OCI-LY7 (cell line): ENCODE measurements at regions of chr11 and their contacts with region 1.

Region 1: DNA sequence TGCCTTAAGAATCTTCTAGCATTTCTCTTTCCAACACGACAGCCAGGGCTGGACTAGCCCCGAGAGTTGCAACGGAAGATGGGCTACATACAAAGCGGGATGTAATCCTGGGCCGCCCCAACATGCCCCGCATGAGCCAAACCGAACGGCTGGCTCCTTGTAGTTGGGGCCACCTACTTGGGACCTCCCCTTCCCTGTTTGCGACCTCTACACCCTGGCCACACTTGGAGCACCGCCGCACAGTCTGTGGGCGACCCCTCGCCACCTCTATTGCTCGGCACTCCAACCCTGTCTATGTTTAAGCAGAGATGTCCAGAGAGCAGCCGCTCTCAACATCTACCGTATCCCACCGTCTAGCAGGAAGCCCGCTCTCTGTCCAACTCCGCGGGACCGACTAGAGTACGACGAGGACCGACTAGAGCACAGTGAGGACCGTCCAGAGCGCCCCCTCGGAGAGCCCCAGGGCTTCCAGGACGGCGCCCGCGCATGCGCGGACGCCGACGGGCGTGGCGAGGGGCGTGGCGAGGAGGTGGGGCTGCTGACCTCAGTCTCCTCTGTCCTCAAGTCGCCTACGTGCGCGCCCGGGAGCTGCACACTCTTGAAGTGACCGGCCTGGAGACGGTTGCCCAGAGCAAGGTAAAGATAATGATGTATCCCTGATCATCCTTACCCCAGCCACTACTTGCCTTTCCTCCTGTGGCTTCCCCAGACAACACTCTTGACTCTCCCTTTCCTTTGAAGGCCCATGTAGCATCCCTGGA is 32.3 kb downstream of the NEAT1 start:
- DNase-seq: peak; percentile 91
- H3K4me3 ChIP-seq: peak overlapping the region; percentile 78
- H3K27ac ChIP-seq: peak overlapping the region; percentile 86
- H3K4me1 ChIP-seq: peaks cover 35% of the 10 kb centered on the region
- CTCF ChIP-seq: peak; percentile 70

Region 2: DNA sequence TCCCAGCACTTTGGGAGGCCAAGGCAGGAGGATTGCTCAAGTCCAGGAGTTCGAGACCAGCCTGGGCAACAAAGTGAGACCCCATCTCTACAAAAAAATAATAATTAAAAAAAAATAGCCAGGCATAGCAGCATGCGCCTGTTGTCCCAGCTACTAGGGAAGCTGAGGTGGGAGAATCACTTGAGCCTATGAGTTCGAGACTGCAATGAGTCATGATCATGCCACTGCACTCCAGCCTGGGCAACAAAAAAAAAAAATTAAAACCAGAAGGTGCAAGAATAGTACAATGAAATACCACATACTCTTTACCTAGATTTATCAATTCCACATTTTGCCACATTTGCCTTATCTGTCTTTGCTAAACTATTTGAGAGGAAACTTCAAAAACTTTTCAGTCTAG is 113.0 kb before region 1 on chr11:
- CTCF ChIA-PET with region 1: no interaction called
- POLR2A ChIA-PET with region 1: no interaction called
- intact Hi-C with region 1: no loop called
- DNase-seq: no peak
- H3K4me3 ChIP-seq: no peak overlapping the region
- H3K27ac ChIP-seq: no peak overlapping the region
- H3K4me1 ChIP-seq: no peaks in the 10 kb centered on the region
- CTCF ChIP-seq: no peak

Region 3: DNA sequence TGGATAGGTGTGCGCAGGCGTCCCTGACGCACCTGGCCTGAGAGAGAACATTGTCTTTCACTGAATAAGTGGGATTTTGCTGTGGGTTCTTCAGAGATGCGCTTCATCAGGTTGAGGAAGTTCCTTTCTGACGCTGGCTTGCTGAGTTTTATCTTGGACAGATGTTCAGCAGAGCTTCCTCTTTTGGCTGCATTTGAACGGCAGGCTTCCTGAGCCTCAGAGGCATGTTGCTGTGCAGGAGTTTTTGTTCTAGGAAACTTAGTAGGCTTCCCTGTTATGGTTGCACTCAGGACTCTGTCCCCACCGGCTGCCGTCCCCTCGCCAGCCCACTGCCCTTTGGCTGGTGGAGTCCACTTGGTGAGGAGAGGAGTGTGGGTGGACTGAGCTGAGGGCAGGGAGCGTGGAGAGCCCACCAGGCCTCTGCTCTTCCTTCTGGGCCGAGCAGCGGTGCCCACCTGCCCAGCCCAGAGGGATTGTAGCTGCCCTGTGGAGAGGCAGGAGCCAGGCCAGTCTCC is 51.2 kb before region 1 on chr11:
- CTCF ChIA-PET with region 1: no interaction called
- POLR2A ChIA-PET with region 1: interaction called, 12 read pairs
- intact Hi-C with region 1: no loop called
- DNase-seq: peak; percentile 94
- H3K4me3 ChIP-seq: peak overlapping the region; percentile 45
- H3K27ac ChIP-seq: peak overlapping the region; percentile 90
- H3K4me1 ChIP-seq: peaks cover 53% of the 10 kb centered on the region
- CTCF ChIP-seq: no peak

Region 4: GRCh38 chr11:65425105-65425970 is 29.5 kb before region 1 on chr11:
- CTCF ChIA-PET with region 1: no interaction called
- POLR2A ChIA-PET with region 1: interaction called, 7 read pairs
- intact Hi-C with region 1: loop called (anchors 2 kb)
- DNase-seq: peak; percentile 86
- H3K4me3 ChIP-seq: peak overlapping the region; percentile 73
- H3K27ac ChIP-seq: peak overlapping the region; percentile 97
- H3K4me1 ChIP-seq: peaks cover 56% of the 10 kb centered on the region
- CTCF ChIP-seq: 0 out of 2 replicates have a peak, but pooled peaks have one; percentile 32

Region 5: GRCh38 chr11:65440831-65441499 is 13.9 kb before region 1 on chr11:
- CTCF ChIA-PET with region 1: no interaction called
- POLR2A ChIA-PET with region 1: interaction called, 6 read pairs
- intact Hi-C with region 1: loop called (anchors 2 kb)
- DNase-seq: peak; percentile 91
- H3K4me3 ChIP-seq: peak overlapping the region; percentile 53
- H3K27ac ChIP-seq: peak overlapping the region; percentile 93
- H3K4me1 ChIP-seq: peaks cover 85% of the 10 kb centered on the region
- CTCF ChIP-seq: no peak

Region 6: DNA sequence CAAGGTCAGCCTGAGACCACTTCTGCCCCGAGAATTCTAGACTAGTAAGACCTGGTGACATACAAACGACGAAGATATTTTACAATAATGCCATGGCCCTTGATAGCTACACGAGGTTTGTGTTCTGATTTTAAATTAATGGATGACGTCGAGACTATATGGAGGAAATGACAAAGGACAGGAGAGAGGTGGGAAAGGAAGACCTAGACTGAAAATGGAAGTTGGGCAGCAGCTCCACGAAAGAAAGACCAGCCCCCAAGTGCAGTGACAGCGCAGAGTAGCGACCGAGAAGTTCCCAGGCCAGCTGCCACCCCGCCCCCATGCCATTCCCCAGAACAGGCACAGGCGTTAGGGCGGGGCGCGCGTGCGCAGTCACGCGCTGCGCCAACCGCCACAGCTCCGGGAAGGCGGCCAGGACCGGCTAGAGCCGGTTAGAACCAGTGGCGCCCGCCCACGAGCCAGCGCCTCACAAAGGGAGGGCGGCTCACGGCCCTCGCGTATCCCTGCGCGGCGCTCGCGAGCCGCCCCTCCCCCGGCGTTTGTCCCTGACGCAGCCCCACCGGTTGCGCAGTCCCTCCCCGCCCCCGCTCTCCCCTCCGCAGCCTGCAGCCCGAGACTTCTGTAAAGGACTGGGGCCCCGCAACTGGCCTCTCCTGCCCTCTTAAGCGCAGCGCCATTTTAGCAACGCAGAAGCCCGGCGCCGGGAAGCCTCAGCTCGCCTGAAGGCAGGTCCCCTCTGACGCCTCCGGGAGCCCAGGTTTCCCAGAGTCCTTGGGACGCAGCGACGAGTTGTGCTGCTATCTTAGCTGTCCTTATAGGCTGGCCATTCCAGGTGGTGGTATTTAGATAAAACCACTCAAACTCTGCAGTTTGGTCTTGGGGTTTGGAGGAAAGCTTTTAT is 42.5 kb after region 1 on chr11:
- CTCF ChIA-PET with region 1: no interaction called
- POLR2A ChIA-PET with region 1: interaction called, 13 read pairs
- intact Hi-C with region 1: loop called (anchors 2 kb)
- DNase-seq: peak; percentile 99
- H3K4me3 ChIP-seq: peak overlapping the region; percentile 79
- H3K27ac ChIP-seq: peak overlapping the region; percentile 98
- H3K4me1 ChIP-seq: peaks cover 52% of the 10 kb centered on the region
- CTCF ChIP-seq: no peak

Region 7: DNA sequence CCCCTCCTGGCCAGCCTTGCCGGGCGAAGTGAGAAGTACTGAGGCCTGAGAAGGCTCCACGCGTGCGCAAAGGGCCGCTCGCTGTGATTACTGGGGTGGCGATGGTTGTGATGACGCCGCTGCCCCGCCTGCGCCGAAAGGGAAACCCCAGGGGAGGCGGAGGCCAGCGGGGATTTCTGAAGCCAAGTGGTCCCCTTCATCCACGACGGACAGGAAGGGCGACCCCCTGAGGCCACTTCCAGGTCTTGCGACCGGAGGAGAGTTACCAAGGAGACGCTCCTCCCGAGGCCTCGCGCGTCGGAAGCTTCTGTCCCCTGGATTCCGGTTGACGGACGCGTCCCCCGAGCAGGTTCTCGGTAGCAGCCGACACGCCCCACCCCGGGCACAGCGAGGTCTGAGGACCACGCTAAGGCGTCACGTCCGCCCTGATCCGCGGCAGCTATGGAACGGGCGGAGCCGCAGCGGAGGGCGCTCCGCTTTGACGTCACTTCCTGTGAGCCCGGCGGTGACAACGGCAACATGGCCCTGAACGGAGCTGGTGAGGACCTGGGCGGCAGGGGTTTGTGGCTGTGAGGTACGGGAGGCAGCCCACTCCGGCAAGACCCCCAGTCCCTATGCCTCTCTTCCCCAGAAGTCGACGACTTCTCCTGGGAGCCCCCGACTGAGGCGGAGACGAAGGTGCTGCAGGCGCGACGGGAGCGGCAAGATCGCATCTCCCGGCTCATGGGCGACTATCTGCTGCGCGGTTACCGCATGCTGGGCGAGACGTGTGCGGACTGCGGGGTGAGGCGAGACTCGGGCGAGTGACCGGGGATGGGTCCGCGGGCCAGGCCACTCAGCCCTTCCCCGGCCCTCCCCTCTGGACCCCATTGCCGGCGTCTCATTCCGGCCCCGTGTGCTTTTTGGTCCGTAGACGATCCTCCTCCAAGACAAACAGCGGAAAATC is 115.4 kb after region 1 on chr11 and contains the start of gene ZNRD2:
- CTCF ChIA-PET with region 1: no interaction called
- POLR2A ChIA-PET with region 1: no interaction called
- intact Hi-C with region 1: no loop called
- DNase-seq: peak; percentile 99
- H3K4me3 ChIP-seq: peak within 1 kb of the TSS; percentile 94
- H3K27ac ChIP-seq: peak within 1 kb of the TSS; percentile 71
- H3K4me1 ChIP-seq: peaks cover 62% of the 10 kb centered on the region
- CTCF ChIP-seq: peak; percentile 69
- total RNA-seq, gene ZNRD2: 37.7 and 60.4 TPM in 2 replicates